Activated CD4-positive, alpha-beta memory T cell treated with anti-CD3 and anti-CD28 coated beads for 36 hours (primary cell): ENCODE measurements at regions of chr11 and their contacts with region 1.

Region 1: DNA sequence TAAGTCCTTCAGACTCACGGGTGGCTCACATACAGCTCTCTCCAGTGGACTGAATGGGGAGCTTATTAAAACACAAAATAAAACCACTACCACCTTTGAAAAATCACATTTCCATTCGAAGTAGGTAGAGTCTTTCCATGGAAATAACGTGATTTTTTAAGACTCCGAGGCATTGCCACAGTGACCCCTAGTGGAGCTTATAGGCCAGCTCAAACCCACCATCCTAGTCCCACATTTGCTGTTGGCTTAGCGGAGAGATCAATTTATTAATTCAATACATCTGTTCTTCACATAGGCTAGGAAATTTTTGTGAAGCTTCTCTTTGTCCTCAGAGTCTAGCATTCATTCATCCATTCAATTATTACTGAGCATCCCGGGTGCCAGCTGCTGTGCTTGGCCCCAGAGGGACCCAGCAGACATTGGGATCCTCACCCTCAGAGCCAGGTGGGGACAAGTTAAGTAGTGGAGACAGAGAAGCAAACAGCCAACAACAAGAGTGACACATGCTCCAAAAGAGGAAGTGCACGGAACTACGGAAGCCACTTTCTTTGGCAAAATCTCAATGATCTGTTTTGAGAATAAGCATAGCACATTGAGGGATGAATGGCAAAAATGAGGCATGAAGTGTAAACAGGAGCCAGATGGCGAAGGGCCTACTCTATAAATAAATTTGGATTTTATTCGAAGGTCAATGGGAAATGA is 10.2 kb upstream of the P4HA3 start:
- DNase-seq: peak; percentile 53
- H3K4me3 Mint-ChIP-seq: no peak overlapping the region
- H3K27ac Mint-ChIP-seq: no peak overlapping the region
- H3K4me1 Mint-ChIP-seq: peaks cover 2% of the 10 kb centered on the region
- H3K27me3 Mint-ChIP-seq: peaks cover 15% of the 10 kb centered on the region

Region 2: GRCh38 chr11:74069147-74070047 is 252.2 kb before region 1 on chr11:
- CTCF ChIA-PET with region 1: no interaction called
- POLR2A ChIA-PET with region 1: no interaction called
- intact Hi-C with region 1: no loop called
- DNase-seq: no peak
- H3K4me3 Mint-ChIP-seq: no peak overlapping the region
- H3K27ac Mint-ChIP-seq: no peak overlapping the region
- H3K4me1 Mint-ChIP-seq: peaks cover 8% of the 10 kb centered on the region
- H3K27me3 Mint-ChIP-seq: no peaks in the 10 kb centered on the region

Region 3: GRCh38 chr11:74299015-74299414 is 22.6 kb before region 1 on chr11:
- CTCF ChIA-PET with region 1: interaction called, 14 read pairs
- POLR2A ChIA-PET with region 1: no interaction called
- intact Hi-C with region 1: no loop called
- DNase-seq: no peak
- H3K4me3 Mint-ChIP-seq: no peak overlapping the region
- H3K27ac Mint-ChIP-seq: no peak overlapping the region
- H3K4me1 Mint-ChIP-seq: peaks cover 5% of the 10 kb centered on the region
- H3K27me3 Mint-ChIP-seq: peaks cover 7% of the 10 kb centered on the region

Region 4: DNA sequence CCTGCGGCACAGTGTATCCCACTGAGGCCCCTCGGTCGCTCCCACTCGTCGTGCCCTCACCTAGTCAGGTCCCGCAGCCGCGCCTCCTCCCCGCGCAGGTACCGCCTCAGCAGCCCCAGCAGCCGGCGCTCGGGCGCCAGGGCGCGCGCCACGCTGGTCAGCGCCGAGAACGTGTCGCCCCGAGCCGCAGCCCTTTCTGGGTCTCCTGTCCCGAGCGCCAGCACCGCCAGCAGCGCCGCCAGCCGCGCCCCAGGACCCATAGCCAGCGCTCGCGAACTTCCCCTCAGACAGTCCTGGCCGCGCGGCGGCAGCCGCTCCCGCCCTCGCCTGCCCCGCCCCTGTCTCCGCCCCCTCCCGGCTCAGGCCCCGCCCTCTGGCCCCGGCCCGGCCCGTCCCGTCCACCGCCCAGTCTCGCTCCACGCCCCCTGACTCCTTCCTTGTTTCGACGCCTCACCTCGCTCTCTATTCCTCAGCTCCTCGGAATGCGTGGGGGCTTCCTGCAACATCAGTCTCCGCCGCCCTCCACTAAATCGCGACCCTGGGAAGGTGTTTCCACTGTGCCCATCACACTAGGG is 10.2 kb before region 1 on chr11 and contains the start of gene P4HA3:
- CTCF ChIA-PET with region 1: interaction called, 10 read pairs
- POLR2A ChIA-PET with region 1: no interaction called
- intact Hi-C with region 1: no loop called
- DNase-seq: peak; percentile 66
- H3K4me3 Mint-ChIP-seq: peak within 1 kb of the TSS; percentile 61
- H3K27ac Mint-ChIP-seq: no peak within 1 kb of the TSS
- H3K4me1 Mint-ChIP-seq: peaks cover 6% of the 10 kb centered on the region
- H3K27me3 Mint-ChIP-seq: peaks cover 30% of the 10 kb centered on the region
- total RNA-seq, gene P4HA3: not detected